Heart right ventricle (tissue), 16 donors: ENCODE measurements at regions of chr10 and their contacts with region 1.

Region 1: DNA sequence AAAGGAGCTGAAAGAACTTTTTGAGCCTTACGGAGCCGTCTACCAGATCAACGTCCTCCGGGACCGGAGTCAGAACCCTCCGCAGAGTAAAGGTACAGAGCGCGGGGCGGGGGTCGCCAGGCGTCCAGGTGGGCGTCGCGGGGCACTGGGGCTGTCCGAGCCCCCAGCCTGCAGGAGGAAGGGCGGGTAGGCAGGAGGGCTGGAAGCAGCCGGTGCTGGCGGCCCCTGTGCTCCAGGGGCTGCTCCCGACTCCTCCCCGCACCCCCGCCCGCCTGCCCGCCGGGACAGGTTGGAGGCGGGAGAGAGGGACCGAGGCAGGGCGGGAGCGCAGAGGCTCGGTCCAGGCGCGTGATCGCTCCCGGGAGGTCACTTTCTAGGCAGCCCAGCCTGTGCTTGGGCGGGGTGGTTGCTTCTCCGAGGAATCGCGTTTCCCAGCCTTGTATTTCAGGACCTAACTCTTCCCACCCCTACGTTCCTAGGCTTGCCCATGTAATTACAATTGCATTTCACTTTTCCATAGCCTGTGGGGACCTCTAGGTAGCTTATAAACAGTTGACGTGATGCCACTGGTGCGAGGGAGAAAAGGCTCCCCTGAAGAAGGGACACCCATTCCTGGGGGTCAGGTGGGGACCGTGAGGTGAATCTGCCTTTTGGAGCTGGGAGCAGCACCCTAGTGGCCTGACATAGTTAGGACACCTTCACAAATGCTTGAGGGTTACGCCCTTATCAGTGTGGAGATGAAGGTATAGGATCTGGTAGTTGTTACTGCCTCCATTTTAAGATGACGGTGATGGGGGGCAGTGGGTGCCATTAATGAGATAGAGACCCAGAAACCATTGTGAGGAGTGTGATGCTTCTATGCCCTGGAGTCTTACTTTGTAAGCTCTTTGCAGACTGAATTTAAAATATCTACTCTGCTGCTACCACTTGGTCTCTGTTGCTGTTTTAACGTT is 148.2 kb downstream of the CELF2 start:
- DNase-seq: peak; percentile 61 to 62
- ATAC-seq: peak; percentile 66 to 89 (median 78)
- H3K4me3 ChIP-seq: peak overlapping the region; percentile 36 to 80 (median 68)
- H3K27ac ChIP-seq: peak overlapping the region; percentile 49 to 97 (median 86)
- H3K4me1 ChIP-seq: peaks cover 0 to 82% (median 43%) of the 10 kb centered on the region in 9 donors
- H3K27me3 ChIP-seq: no peaks in the 10 kb centered on the region
- CTCF ChIP-seq: peak in 8 of 9 donors; percentile 13 to 57 (median 48)

Region 2: GRCh38 chr10:10903620-10904019 is 262.2 kb before region 1 on chr10:
- intact Hi-C with region 1: no loop called
- DNase-seq: no peak
- ATAC-seq: no peak
- H3K4me3 ChIP-seq: no peak overlapping the region
- H3K27ac ChIP-seq: no peak overlapping the region
- H3K4me1 ChIP-seq: no peaks in the 10 kb centered on the region
- H3K27me3 ChIP-seq: no peaks in the 10 kb centered on the region
- CTCF ChIP-seq: no peak

Region 3: DNA sequence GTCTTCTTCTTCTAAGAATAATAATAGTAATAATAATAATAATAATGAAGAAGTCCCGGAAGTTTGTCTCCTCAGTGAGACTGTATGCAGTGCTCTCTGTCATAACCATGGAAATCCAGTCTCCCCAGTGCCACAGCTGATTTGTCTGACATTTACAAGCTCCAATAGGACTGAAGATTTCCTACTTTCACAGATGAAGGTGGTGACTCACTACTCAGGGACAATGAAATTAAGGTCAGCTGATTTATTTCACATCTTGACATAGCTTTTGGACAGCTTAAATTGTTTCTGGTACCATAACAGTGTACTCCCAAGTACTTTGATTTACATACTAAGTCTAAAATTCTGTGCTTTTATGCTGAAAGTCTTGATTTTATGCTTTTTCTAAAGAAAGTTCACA is 141.3 kb before region 1 on chr10:
- intact Hi-C with region 1: loop called in 1 of 10 experiments (anchors 10 kb)
- DNase-seq: no peak
- ATAC-seq: peak in 6 of 8 donors; percentile 10 to 91 (median 52)
- H3K4me3 ChIP-seq: no peak overlapping the region
- H3K27ac ChIP-seq: peak overlapping the region in 2 of 10 donors; percentile 41 to 92
- H3K4me1 ChIP-seq: peaks cover 9 to 75% (median 54%) of the 10 kb centered on the region in 9 donors
- H3K27me3 ChIP-seq: peaks cover 0 to 26% (median 0%) of the 10 kb centered on the region in 7 donors
- CTCF ChIP-seq: no peak

Region 4: GRCh38 chr10:11045995-11046775 is 119.7 kb before region 1 on chr10:
- intact Hi-C with region 1: loop called in 3 of 10 experiments (anchors 5 to 10 kb)
- DNase-seq: peak; percentile 70 to 82
- ATAC-seq: peak; percentile 32 to 82 (median 72)
- H3K4me3 ChIP-seq: peak overlapping the region in 7 of 10 donors; percentile 1 to 28 (median 16)
- H3K27ac ChIP-seq: peak overlapping the region; percentile 61 to 86 (median 71)
- H3K4me1 ChIP-seq: peaks cover 25 to 89% (median 75%) of the 10 kb centered on the region in 9 donors
- H3K27me3 ChIP-seq: no peaks in the 10 kb centered on the region
- CTCF ChIP-seq: no peak

Region 5: DNA sequence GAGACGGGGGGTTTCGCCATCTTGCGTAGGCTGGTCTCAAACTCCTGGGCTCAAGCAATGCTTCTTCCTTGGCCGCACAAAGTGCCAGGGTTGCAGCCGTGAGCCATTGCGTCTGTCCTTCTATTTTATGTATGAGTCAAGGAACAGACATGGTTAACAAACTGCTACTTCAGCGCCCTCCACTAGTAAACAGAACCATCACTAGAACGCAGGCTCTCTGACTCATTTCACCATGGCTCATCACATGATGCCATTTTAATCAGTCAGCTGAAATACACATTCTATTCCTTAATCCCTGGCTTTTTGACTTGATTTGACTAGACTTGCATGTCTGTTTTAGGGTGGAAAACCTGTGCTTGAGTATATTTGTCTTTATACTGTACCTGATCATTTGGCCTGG is 106.9 kb before region 1 on chr10:
- intact Hi-C with region 1: loop called in 1 of 10 experiments (anchors 10 kb)
- DNase-seq: no peak
- ATAC-seq: peak in 4 of 8 donors; percentile 15 to 40 (median 30)
- H3K4me3 ChIP-seq: no peak overlapping the region
- H3K27ac ChIP-seq: no peak overlapping the region
- H3K4me1 ChIP-seq: peaks cover 11 to 43% (median 38%) of the 10 kb centered on the region in 9 donors
- H3K27me3 ChIP-seq: no peaks in the 10 kb centered on the region
- CTCF ChIP-seq: no peak

Region 6: GRCh38 chr10:11113156-11113555 is 52.7 kb before region 1 on chr10:
- intact Hi-C with region 1: loop called in 2 of 10 experiments (anchors 5 kb)
- DNase-seq: no peak
- ATAC-seq: no peak
- H3K4me3 ChIP-seq: no peak overlapping the region
- H3K27ac ChIP-seq: peak overlapping the region in 4 of 10 donors; percentile 33 to 73 (median 68)
- H3K4me1 ChIP-seq: peaks cover 0 to 69% (median 45%) of the 10 kb centered on the region in 9 donors
- H3K27me3 ChIP-seq: no peaks in the 10 kb centered on the region
- CTCF ChIP-seq: peak in 8 of 9 donors; percentile 8 to 49 (median 34)

Region 7: DNA sequence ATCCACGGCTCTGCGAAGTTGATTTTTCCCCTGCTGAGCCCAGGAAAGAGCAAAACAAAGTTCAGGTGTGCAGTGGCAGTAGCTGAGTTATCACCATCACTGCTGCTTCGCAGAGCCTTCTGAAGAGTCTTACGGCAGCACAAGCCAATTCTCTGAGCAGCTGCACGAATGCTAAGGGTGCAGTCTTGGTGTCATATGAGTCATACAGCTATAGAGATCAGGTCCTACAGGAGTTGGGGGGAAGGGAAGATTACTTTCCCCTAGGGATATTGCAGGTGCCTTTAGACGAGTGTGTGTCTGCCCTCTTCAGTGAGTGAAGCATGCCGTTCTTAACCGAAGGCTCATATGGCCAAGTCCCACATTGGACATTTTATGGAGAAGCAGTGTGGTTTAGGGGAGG is 79.6 kb after region 1 on chr10:
- intact Hi-C with region 1: loop called in 2 of 10 experiments (anchors 5 to 10 kb)
- DNase-seq: no peak
- ATAC-seq: no peak
- H3K4me3 ChIP-seq: no peak overlapping the region
- H3K27ac ChIP-seq: no peak overlapping the region
- H3K4me1 ChIP-seq: peaks cover 9 to 84% (median 49%) of the 10 kb centered on the region in 9 donors
- H3K27me3 ChIP-seq: no peaks in the 10 kb centered on the region
- CTCF ChIP-seq: no peak

Region 8: DNA sequence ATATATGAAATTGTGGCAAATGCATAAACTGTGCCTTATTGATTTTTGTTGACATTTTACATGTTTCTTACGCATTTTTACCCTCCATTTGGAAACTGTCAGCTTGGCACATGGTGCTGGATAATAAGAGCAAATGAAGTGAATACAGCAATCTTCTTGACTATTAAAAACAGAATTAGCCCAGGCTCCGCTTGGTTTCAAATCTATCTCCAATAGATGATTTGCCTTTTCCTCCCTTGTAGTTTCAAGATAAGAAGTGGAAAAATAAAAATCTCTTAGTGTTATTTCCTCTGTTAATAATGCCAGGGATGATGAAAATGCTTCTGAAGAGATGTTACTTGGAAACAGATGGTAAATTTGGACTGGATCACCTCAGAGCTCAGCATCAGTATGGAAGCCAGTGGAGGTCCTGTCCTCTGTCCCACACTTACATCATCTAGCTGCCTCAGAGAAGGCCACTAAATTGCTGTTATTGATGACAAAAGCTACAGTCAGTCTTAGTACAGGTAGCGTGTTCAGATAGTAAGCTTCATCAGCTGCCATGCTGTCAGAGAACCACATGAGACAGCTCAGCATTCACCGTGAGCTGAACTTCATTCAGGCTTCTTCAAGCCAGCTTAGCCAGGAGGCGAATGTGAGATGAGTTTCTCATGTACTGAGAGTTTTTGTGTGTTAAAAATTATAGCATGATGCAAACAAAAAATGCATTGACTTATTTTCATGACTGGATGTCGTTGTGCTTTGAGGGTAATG is 98.6 kb after region 1 on chr10:
- intact Hi-C with region 1: loop called in 2 of 10 experiments (anchors 5 to 10 kb)
- DNase-seq: no peak
- ATAC-seq: no peak
- H3K4me3 ChIP-seq: no peak overlapping the region
- H3K27ac ChIP-seq: peak overlapping the region in 4 of 10 donors; percentile 2 to 76 (median 74)
- H3K4me1 ChIP-seq: peaks cover 3 to 75% (median 56%) of the 10 kb centered on the region in 9 donors
- H3K27me3 ChIP-seq: no peaks in the 10 kb centered on the region
- CTCF ChIP-seq: no peak

Region 9: DNA sequence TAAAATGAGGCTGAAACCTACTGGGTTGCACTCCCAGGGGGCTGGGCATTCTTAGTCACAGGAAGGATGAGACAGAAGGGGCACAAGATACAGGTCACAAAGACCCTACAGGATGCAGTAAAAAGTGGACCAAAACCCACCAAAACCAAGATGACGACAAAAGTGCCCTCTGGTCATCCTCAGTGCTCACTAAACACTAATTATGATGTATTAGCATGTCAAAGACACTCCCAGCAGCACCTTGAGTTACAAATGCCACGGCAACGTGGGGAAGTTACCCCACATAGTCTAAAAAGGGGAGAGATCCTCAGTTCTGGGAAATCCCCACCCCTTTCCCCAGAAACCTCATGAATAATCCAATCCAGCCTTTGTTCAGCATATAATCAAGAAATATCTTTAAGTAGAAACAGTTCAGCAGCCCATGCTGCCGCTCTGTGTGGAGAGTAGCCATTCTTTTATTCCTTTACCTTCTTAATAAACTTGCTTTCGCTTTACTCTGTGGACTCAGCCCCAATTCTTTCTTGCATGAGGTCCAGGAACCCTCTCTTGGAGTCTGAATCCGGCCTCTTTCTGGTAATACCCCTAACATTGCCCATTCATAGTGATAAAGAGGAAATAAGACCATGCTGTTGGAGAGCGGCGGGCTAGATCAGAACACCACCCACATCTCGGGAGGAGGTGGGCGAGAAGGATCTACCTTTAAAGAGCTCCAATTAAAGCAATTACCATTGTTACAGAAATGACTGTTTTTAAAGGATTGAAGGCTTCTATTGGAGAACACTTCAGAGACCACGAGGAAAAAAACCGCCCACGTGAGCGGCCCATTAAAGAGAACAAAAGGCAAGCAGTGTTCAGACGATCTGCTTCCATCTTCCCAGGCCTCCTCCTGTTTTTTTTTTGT is 274.6 kb after region 1 on chr10:
- intact Hi-C with region 1: no loop called
- DNase-seq: no peak
- ATAC-seq: no peak
- H3K4me3 ChIP-seq: no peak overlapping the region
- H3K27ac ChIP-seq: no peak overlapping the region
- H3K4me1 ChIP-seq: no peaks in the 10 kb centered on the region
- H3K27me3 ChIP-seq: peaks cover 0 to 15% (median under 1%) of the 10 kb centered on the region in 7 donors
- CTCF ChIP-seq: no peak